Keratinocyte (primary cell): ENCODE measurements at regions of chr2 and their contacts with region 1.

Region 1: DNA sequence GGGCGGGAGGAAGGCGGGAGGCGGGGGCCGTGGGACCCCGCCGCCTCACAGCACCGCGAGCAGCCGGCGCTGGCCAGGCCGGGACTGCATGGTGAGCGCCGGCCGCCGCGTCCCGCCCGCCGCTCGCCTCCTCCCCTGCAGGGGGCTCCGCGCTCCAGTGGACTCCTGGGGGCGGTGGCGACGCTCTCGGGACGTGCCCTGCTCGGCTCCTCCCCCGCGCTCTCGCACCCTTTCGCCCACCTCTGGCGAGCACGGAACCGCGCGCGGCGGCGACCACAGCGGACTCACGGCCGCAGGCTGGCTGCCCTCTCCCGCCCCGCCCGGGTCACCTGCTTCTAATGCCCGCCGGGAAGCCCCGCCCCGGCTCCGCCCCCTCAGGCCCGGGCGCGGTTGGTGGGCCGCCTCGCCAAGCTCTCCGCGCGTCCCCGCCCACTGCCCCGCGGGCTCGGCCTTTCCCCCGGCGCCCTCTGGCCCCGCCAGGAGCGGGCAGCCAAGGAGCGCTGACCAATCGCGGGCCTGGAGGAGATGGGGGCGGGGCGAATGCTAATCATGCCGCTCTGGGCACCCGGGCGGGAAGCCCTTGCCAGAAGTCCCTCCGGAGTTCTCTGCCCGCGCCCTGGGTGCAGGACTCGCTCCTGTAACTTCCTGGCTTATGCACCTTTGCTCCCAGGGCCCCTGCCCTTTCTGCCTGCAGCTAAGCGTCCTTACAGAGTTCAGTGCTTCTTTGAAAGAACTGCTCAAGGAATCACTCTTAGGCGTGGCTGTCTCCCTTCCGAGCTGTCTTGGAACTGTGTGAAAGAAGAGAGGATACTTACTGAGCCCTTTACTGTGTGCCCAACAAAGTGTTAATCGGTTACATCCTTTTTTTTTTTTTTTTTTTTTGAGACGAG is at the start of gene FZD5:
- DNase-seq: peak; percentile 41
- H3K4me3 ChIP-seq: peak within 1 kb of the TSS; percentile 77 to 92 (median 90)
- H3K27ac ChIP-seq: peak within 1 kb of the TSS; percentile 52
- H3K4me1 ChIP-seq: peaks cover 10% of the 10 kb centered on the region
- H3K27me3 ChIP-seq: no peaks in the 10 kb centered on the region
- CTCF ChIP-seq: peak in 2 of 3 experiments; percentile 67 to 70
- polyA plus RNA-seq, gene FZD5: 1.6 to 2.4 TPM (median 2.1 TPM) in 3 replicates

Region 2: DNA sequence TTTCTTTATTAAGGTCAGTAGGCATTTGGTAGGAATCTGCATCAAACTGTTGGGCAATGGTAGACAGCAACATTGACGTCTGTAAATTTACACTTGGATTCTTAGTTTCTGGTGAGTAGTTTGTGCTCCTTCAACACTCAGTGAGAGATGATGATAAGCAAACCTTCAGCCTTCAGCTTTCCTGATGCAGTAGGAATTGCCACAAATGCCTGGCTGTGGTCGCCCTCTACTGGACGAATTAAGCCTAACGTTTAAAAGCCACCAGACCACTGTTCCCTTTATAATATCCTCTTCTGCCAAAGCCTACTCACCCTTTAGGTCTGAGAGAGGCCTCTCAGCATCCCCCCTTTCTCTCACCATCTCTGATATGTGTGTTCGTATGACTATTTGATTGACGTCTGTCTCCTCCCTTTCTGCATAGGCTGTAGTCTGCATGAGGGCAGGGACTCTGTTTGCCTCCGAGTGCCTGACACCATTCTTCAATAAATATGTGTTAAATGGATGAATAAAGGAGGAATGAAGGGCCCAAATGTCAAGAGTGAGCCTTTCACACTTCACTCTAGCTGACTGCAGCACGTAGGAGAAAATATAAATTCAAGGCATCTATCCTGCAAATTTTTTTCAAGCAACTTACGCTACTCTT is 302.5 kb after region 1 on chr2:
- dilution Hi-C with region 1: loop called (anchors 25 kb)
- DNase-seq: peak; percentile 21
- H3K4me3 ChIP-seq: no peak overlapping the region
- H3K27ac ChIP-seq: no peak overlapping the region
- H3K4me1 ChIP-seq: no peaks in the 10 kb centered on the region
- H3K27me3 ChIP-seq: no peaks in the 10 kb centered on the region
- CTCF ChIP-seq: peak; percentile 79 to 85 (median 81)